Left ventricle myocardium inferior (tissue), 1 donor: ENCODE measurements at regions of chr10 and their contacts with region 1.

Region 1: GRCh38 chr10:77846718-77847630 is 79.6 kb downstream of the DLG5 start:
- DNase-seq: peak; percentile 75
- H3K4me3 ChIP-seq: no peak overlapping the region
- H3K27ac ChIP-seq: peak overlapping the region; percentile 57
- H3K4me1 ChIP-seq: peaks cover 11% of the 10 kb centered on the region
- H3K27me3 ChIP-seq: no peaks in the 10 kb centered on the region
- CTCF ChIP-seq: peak; percentile 99

Region 2: GRCh38 chr10:77784856-77785255 is 62.1 kb before region 1 on chr10:
- intact Hi-C with region 1: no loop called
- DNase-seq: no peak
- H3K4me3 ChIP-seq: no peak overlapping the region
- H3K27ac ChIP-seq: no peak overlapping the region
- H3K4me1 ChIP-seq: no peaks in the 10 kb centered on the region
- H3K27me3 ChIP-seq: no peaks in the 10 kb centered on the region
- CTCF ChIP-seq: no peak

Region 3: GRCh38 chr10:78004215-78005026 is 157.4 kb after region 1 on chr10:
- intact Hi-C with region 1: loop called (anchors 10 kb)
- DNase-seq: no peak
- H3K4me3 ChIP-seq: no peak overlapping the region
- H3K27ac ChIP-seq: no peak overlapping the region
- H3K4me1 ChIP-seq: no peaks in the 10 kb centered on the region
- H3K27me3 ChIP-seq: no peaks in the 10 kb centered on the region
- CTCF ChIP-seq: peak; percentile 44